Dorsolateral prefrontal cortex (tissue), 120 donors: ENCODE measurements at regions of chr5 and their contacts with region 1.

Region 1: GRCh38 chr5:151771259-151772028 is at the start of gene G3BP1:
- DNase-seq: peak; percentile 98 to 100 (median 100)
- H3K4me3 ChIP-seq: peak within 1 kb of the TSS; percentile 68 to 98 (median 85)
- H3K27ac ChIP-seq: peak within 1 kb of the TSS; percentile 86 to 100 (median 99)
- H3K27me3 ChIP-seq: no peaks in the 10 kb centered on the region
- CTCF ChIP-seq: peak; percentile 28 to 87 (median 76)
- total RNA-seq, gene G3BP1: 61.7 to 135 (median 87.2) TPM

Region 2: GRCh38 chr5:151447174-151448037 is 324.0 kb before region 1 on chr5 and contains the start of gene SLC36A1:
- intact Hi-C with region 1: loop called in 1 of 2 experiments (anchors 10 kb)
- DNase-seq: peak; percentile 93 to 96 (median 95)
- H3K4me3 ChIP-seq: peak within 1 kb of the TSS; percentile 49 to 95 (median 83)
- H3K27ac ChIP-seq: peak within 1 kb of the TSS in 53 of 59 donors; percentile 7 to 89 (median 78)
- H3K27me3 ChIP-seq: no peaks in the 10 kb centered on the region
- CTCF ChIP-seq: peak; percentile 98 to 100 (median 99)
- total RNA-seq, gene SLC36A1: 18.6 to 85.7 (median 43.3) TPM

Region 3: DNA sequence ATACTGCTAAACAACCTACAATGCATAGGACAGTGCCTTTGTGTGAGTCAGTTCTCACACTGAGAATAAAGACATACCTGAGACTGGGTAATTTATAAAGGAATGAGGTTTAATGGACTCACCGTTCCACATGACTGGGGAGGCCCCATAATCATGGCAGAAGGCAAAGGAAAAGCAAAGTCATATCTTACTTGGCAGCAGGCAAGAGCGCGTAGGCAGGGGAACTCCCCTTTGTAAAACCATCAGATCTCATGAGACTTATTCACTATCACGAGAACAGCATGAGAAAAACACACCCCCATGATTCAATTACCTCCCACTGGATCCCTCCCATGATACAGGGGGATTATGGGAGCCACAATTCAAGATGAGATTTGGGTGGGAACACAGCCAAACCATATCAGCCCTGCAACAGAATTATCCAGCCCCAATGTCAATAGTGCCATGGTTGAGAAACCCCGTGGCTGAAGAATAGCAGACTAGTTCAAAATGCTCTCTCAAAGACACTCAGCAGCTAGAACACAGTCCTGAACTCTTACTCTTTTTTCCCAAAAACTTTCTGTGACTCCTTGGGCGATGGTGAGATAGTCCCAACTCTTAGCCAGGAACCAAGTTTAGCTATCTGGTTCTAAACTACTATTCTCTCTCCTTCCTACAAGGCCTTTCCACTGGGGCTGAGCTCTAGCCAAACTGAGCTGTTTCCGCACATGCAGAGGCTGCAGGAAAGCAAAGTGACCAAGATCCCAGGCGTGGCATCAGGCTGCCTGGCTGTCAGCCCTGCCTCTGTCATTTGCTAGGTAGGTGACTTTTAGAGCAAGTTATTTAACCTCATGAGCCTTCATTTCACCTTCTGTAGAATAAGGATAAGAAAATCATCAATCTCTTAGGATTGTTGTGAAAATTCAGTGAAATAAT is 202.1 kb before region 1 on chr5:
- intact Hi-C with region 1: no loop called
- DNase-seq: no peak
- H3K4me3 ChIP-seq: no peak overlapping the region
- H3K27ac ChIP-seq: no peak overlapping the region
- H3K27me3 ChIP-seq: peaks cover 0 to 7% (median 0%) of the 10 kb centered on the region in 45 donors
- CTCF ChIP-seq: no peak

Region 4: GRCh38 chr5:151699071-151699901 is 72.2 kb before region 1 on chr5:
- intact Hi-C with region 1: no loop called
- DNase-seq: no peak
- H3K4me3 ChIP-seq: no peak overlapping the region
- H3K27ac ChIP-seq: peak overlapping the region in 44 of 59 donors; percentile 14 to 80 (median 54)
- H3K27me3 ChIP-seq: no peaks in the 10 kb centered on the region
- CTCF ChIP-seq: no peak

Region 5: GRCh38 chr5:151740336-151740942 is 31.0 kb before region 1 on chr5:
- intact Hi-C with region 1: loop called in 1 of 2 experiments (anchors 1 kb)
- DNase-seq: peak in 6 of 10 donors; percentile 28 to 57 (median 50)
- H3K4me3 ChIP-seq: peak overlapping the region in 7 of 59 donors; percentile 2 to 39 (median 12)
- H3K27ac ChIP-seq: peak overlapping the region in 36 of 59 donors; percentile 6 to 76 (median 42)
- H3K27me3 ChIP-seq: no peaks in the 10 kb centered on the region
- CTCF ChIP-seq: peak; percentile 81 to 98 (median 93)

Region 6: DNA sequence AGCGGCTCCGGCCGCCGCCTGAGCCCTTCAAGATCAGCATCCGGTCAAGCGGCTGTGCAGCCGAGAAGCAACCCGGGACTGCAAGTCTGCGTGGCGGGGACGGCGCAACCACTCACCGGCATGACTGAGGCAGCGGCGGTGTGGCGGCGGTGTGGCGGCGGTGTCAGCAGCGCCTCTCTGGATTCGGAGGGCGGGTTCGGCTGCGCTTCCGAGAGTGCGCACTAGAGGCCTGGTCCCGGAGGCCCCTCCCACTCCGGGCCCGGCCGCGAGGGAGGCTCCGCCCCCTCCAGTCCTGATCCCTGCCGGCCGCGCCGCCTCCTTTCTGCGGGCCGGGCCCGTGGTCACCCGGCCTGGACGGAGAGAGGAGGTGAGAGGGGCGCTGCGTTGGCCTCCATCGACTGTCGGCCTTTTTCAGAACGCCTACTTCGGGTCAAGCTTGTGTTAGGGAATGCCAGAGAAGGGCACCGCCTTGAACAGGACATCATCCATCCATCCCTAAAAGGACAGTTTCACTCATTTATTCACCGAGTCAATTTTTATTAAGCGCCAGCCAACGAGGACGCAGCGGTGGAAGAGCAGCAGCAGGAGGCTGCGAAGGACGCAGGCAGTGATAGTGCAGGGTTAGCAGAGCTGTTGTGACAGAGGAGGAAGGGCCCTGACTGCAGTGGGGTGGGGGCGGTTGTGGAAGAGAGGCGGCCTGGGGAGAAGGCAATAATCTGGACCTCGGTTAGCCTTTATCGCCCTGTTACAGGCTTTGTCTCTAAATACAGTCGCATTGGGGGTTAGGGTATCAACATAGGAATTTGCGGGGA is 12.8 kb before region 1 on chr5 and contains the start of gene ATOX1:
- intact Hi-C with region 1: loop called (anchors 1 kb)
- DNase-seq: peak; percentile 82 to 96 (median 92)
- H3K4me3 ChIP-seq: peak within 1 kb of the TSS; percentile 67 to 99 (median 91)
- H3K27ac ChIP-seq: peak within 1 kb of the TSS; percentile 52 to 99 (median 94)
- H3K27me3 ChIP-seq: no peaks in the 10 kb centered on the region
- CTCF ChIP-seq: peak in 53 of 56 donors; percentile 6 to 76 (median 55)
- total RNA-seq, gene ATOX1: 63.0 to 149 (median 94.3) TPM

Region 7: DNA sequence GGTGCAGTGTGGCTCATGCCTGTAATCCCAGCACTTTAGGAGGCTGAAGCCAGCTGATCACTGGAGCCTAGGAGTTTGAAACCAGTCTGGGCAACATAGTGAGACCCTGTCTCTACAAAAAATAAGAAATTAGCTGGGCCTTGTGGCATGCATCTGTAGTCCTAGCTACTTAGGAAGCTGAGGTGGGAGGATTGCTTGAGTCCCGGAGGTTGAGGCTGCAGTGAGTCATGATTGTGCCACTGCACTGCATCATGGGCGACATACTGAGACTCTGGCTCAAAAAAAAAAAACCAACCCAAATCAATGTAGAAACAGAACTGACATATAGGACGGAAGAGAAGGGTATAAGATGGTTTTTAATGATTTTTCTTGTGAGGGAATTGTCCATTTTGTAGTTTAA is 28.0 kb after region 1 on chr5:
- intact Hi-C with region 1: loop called in 1 of 2 experiments (anchors 1 kb)
- DNase-seq: no peak
- H3K4me3 ChIP-seq: no peak overlapping the region
- H3K27ac ChIP-seq: no peak overlapping the region
- H3K27me3 ChIP-seq: no peaks in the 10 kb centered on the region
- CTCF ChIP-seq: no peak

Region 8: GRCh38 chr5:151811593-151812321 is 40.3 kb after region 1 on chr5:
- intact Hi-C with region 1: loop called in 1 of 2 experiments (anchors 5 kb)
- DNase-seq: no peak
- H3K4me3 ChIP-seq: no peak overlapping the region
- H3K27ac ChIP-seq: peak overlapping the region in 2 of 59 donors; percentile 17 to 27
- H3K27me3 ChIP-seq: no peaks in the 10 kb centered on the region
- CTCF ChIP-seq: no peak